ENCODE measurements at regions of chr1 and their contacts with region 1.

Region 1: GRCh38 chr1:71170925-71171324 is 90.1 kb upstream of the ZRANB2 start:
- DNase-seq: no peak

Region 2: GRCh38 chr1:71116729-71117128 is 54.2 kb before region 1 on chr1:
- intact Hi-C with region 1: loop called in 1 of 2 experiments (anchors 2 kb)
- DNase-seq: no peak